Calu3 (cell line): ENCODE measurements at regions of chr7 and their contacts with region 1.

Region 1: DNA sequence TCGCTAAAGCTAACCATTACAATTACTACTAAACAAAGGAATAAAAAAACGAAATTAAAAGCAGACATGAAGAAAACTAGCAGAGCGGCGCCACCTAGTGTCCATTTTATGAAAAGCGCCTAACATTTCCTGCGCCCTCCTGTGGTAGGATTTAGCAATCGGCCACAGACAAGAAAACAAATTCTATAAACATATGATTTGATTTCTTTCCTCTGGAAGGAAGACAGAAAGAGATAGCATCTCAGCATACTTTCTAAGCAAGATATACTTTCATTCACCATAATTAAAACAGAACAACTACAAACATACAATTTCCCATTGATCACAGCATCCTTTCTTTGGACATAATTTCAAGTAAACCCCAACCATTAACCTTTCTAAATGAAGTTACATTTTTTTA is 337.7 kb upstream of the NPVF start:
- DNase-seq: peak; percentile 70
- H3K4me3 Mint-ChIP-seq: no peak overlapping the region
- H3K27ac Mint-ChIP-seq: no peak overlapping the region
- H3K4me1 Mint-ChIP-seq: peaks cover 13% of the 10 kb centered on the region
- H3K27me3 Mint-ChIP-seq: peaks cover 43% of the 10 kb centered on the region
- CTCF ChIP-seq: peak; percentile 100

Region 2: GRCh38 chr7:25259587-25260243 is 306.2 kb before region 1 on chr7:
- CTCF ChIA-PET with region 1: interaction called, 20 read pairs
- intact Hi-C with region 1: loop called (anchors 1 kb)
- DNase-seq: peak; percentile 80
- H3K4me3 Mint-ChIP-seq: no peak overlapping the region
- H3K27ac Mint-ChIP-seq: no peak overlapping the region
- H3K4me1 Mint-ChIP-seq: peaks cover 37% of the 10 kb centered on the region
- H3K27me3 Mint-ChIP-seq: peaks cover 60% of the 10 kb centered on the region
- CTCF ChIP-seq: peak; percentile 93

Region 3: DNA sequence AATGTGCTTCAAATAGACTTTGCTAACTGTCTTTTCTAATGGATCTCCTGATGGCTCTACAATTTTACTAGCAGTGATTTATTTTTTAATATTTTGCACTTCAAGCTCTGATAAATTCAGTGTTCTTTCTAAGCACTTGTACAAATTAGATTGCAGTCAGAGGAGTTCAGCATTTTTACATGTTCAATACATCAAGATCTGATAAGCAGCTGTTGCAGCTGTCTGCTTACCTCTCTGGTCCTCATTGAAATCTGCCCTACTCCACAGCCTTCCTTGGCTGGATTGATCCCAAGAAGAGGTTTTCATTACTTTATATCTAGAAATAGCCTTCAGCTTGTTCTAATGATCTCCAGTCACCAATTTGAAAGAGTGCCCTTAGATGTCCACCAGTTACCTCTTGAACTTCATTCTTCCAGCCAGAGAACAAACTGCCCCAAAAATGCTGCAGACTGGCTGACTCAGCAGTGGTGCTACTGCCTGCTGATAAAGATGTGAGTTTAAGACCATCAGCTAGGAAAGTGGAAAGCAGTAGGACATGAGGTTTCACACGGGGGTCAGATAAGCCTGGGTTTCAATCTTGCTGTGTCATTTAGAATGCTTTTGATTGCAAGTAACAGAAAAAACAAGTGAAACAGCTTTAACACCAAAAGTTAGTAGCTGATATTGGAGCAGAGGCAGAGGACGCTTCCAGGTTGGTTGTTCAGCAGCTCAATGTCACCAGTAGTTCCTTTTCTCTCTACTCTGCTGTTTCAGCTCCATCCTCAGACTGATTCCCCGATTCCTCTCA is 13.2 kb after region 1 on chr7:
- CTCF ChIA-PET with region 1: interaction called, 10 read pairs
- intact Hi-C with region 1: no loop called
- DNase-seq: no peak
- H3K4me3 Mint-ChIP-seq: no peak overlapping the region
- H3K27ac Mint-ChIP-seq: no peak overlapping the region
- H3K4me1 Mint-ChIP-seq: no peaks in the 10 kb centered on the region
- H3K27me3 Mint-ChIP-seq: peaks cover 97% of the 10 kb centered on the region
- CTCF ChIP-seq: no peak